Body of pancreas (tissue), 4 donors: ENCODE measurements at regions of chr1 and their contacts with region 1.

Region 1: DNA sequence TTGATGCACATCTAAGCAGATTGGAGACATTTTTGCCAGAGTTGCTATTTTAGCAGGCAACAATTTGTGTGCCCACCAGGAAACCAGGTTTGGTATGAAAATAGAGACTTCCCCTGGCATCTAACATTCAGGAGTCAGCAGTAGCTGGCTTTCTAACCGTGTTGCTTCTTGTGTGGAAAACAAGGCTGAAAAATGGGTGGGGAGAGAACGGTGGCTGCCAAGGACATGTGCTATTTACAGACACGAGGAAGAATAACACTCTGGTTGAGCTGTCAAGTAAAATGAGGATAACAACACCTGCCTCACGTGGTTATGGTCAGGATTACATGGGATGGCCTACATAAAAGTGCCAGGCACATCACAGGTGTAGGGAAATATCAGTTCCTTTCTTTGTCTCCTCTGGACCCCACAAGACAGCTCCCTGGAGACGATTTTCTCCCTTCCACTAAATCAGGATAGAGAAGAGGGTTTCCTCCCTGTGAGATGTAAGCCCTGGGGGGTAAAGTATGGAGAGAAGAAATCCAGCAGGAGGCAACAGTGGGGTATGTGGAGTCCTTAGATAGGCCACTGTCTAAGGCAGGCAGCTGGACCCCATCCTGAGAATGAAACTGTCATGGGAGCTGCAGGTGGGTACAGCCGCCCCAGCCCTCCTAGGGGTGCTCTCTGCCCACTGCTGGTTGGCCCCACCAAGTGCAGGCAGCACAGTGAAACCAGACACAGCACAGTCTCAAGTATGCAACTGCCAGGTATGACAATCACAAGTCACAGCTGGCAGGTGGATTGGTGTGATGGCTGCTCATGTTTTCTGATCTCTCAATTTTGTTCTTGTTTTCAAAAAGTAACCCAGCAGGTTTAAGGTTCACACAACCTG is 80.3 kb downstream of the TENT5C start:
- DNase-seq: peak in 2 of 4 donors; percentile 16 to 25
- ATAC-seq: peak; percentile 20
- H3K4me3 ChIP-seq: no peak overlapping the region
- H3K27ac ChIP-seq: no peak overlapping the region
- H3K4me1 ChIP-seq: peaks cover 22% of the 10 kb centered on the region
- H3K27me3 ChIP-seq: no peaks in the 10 kb centered on the region
- CTCF ChIP-seq: no peak
- POLR2A ChIP-seq: no peak

Region 2: GRCh38 chr1:117644696-117645311 is 41.4 kb before region 1 on chr1:
- intact Hi-C with region 1: no loop called
- DNase-seq: no peak
- ATAC-seq: no peak
- H3K4me3 ChIP-seq: no peak overlapping the region
- H3K27ac ChIP-seq: no peak overlapping the region
- H3K4me1 ChIP-seq: peaks cover 8% of the 10 kb centered on the region
- H3K27me3 ChIP-seq: no peaks in the 10 kb centered on the region
- CTCF ChIP-seq: no peak
- POLR2A ChIP-seq: no peak

Region 3: GRCh38 chr1:117740496-117740895 is 54.3 kb after region 1 on chr1:
- intact Hi-C with region 1: loop called (anchors 10 kb)
- DNase-seq: peak; percentile 82 to 93 (median 88)
- ATAC-seq: peak; percentile 98
- H3K4me3 ChIP-seq: no peak overlapping the region
- H3K27ac ChIP-seq: peak overlapping the region; percentile 58 to 79 (median 68)
- H3K4me1 ChIP-seq: peaks cover 31% of the 10 kb centered on the region
- H3K27me3 ChIP-seq: no peaks in the 10 kb centered on the region
- CTCF ChIP-seq: no peak
- POLR2A ChIP-seq: no peak

Region 4: DNA sequence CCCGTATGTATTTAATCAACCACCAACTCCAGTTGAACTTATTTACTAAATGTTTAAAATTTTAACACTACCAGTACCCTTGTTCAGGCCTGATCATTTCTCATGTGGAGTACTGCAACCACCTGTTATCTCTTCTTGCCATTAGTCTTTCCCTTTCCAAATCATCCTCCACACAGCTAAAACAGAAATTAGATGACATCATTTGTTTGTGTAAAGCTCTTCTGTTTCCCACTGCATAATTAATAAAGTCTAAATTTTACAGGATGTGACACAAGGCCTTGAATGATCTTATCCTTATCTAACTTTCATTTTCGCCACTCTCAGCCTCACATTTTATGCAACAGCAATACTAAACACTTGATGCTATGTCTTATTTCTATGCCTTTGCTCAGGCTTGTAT is 218.8 kb after region 1 on chr1:
- intact Hi-C with region 1: no loop called
- DNase-seq: no peak
- ATAC-seq: no peak
- H3K4me3 ChIP-seq: no peak overlapping the region
- H3K27ac ChIP-seq: no peak overlapping the region
- H3K4me1 ChIP-seq: peaks cover 15% of the 10 kb centered on the region
- H3K27me3 ChIP-seq: no peaks in the 10 kb centered on the region
- CTCF ChIP-seq: no peak
- POLR2A ChIP-seq: no peak